CD4-positive, alpha-beta T cell (primary cell): ENCODE measurements at regions of chrX and their contacts with region 1.

Region 1: DNA sequence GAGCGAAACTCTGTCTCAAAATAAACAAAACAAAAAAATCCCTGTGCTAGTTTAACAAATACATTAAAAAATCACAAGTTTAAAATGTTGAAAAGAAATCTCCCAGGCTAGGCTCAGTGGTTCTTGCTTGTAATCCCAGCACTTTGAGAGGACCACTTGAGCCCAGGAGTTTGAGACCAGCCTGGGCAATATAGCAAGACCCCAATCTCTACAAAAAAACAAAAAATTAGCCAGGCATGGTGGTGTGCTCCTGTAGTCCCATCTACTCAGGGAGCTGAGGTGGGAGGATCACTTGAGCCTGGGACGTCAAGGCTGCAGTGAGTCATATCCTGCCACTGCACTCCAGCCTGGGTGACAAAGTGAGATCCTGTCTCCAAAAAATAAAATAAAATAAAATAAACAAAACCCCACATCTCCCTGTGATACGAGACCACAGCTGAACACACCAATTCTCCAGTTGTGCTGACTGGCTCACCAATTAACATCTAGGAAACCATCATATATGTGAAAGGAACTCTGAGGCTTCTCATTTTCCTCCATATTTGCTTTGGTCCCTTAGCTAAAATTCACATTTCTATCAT is 7.3 kb downstream of the RPS4X start:
- DNase-seq: peak in 4 of 14 experiments; percentile 7 to 31 (median 16)
- ATAC-seq: peak; percentile 64
- H3K4me3 ChIP-seq: no peak overlapping the region
- H3K4me3 Mint-ChIP-seq: no peak overlapping the region
- H3K27ac ChIP-seq: no peak overlapping the region
- H3K27ac Mint-ChIP-seq: peak overlapping the region; percentile 80
- H3K4me1 ChIP-seq: peaks cover 15% of the 10 kb centered on the region
- H3K4me1 Mint-ChIP-seq: peaks cover 28% of the 10 kb centered on the region
- H3K27me3 ChIP-seq: no peaks in the 10 kb centered on the region
- H3K27me3 Mint-ChIP-seq: no peaks in the 10 kb centered on the region
- CTCF ChIP-seq: no peak

Region 2: GRCh38 chrX:72018277-72019112 is 251.3 kb before region 1 on chrX:
- CTCF ChIA-PET with region 1: no interaction called
- POLR2A ChIA-PET with region 1: no interaction called
- intact Hi-C with region 1: loop called in 1 of 2 experiments (anchors 10 kb)
- DNase-seq: peak; percentile 60 to 92 (median 76)
- ATAC-seq: peak; percentile 97
- H3K4me3 ChIP-seq: peak overlapping the region; percentile 10
- H3K4me3 Mint-ChIP-seq: no peak overlapping the region
- H3K27ac ChIP-seq: no peak overlapping the region
- H3K27ac Mint-ChIP-seq: no peak overlapping the region
- H3K4me1 ChIP-seq: peaks cover 25% of the 10 kb centered on the region
- H3K4me1 Mint-ChIP-seq: peaks cover 12% of the 10 kb centered on the region
- H3K27me3 ChIP-seq: no peaks in the 10 kb centered on the region
- H3K27me3 Mint-ChIP-seq: peaks cover 15% of the 10 kb centered on the region
- CTCF ChIP-seq: peak; percentile 65

Region 3: DNA sequence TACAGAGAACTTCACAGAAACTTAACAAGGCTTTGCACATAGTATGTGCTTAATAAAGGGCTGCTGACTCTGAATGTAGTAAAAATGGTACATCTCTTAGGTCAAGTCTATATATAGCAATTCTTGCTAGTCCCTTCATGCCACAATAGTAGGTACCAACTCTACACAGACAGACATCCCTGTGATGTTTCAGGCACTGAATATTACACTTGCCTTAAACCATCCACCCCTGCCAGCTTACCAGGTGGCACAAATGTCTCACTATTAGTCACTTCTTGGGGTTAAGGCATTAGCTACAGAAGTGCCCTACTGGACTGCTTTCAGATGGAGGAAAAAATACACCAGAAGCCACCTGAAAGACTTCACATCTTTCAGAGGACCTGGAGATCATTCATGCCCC is 122.3 kb after region 1 on chrX:
- CTCF ChIA-PET with region 1: no interaction called
- POLR2A ChIA-PET with region 1: no interaction called
- intact Hi-C with region 1: no loop called
- DNase-seq: no peak
- ATAC-seq: no peak
- H3K4me3 ChIP-seq: no peak overlapping the region
- H3K4me3 Mint-ChIP-seq: no peak overlapping the region
- H3K27ac ChIP-seq: no peak overlapping the region
- H3K27ac Mint-ChIP-seq: no peak overlapping the region
- H3K4me1 ChIP-seq: no peaks in the 10 kb centered on the region
- H3K4me1 Mint-ChIP-seq: no peaks in the 10 kb centered on the region
- H3K27me3 ChIP-seq: no peaks in the 10 kb centered on the region
- H3K27me3 Mint-ChIP-seq: no peaks in the 10 kb centered on the region
- CTCF ChIP-seq: no peak

Region 4: GRCh38 chrX:72572248-72573157 is 302.7 kb after region 1 on chrX and contains the start of gene HDAC8:
- CTCF ChIA-PET with region 1: no interaction called
- POLR2A ChIA-PET with region 1: no interaction called
- intact Hi-C with region 1: loop called in 1 of 2 experiments (anchors 10 kb)
- DNase-seq: peak; percentile 7 to 79 (median 24)
- ATAC-seq: peak; percentile 83
- H3K4me3 ChIP-seq: peak within 1 kb of the TSS; percentile 88
- H3K4me3 Mint-ChIP-seq: peak within 1 kb of the TSS; percentile 97
- H3K27ac ChIP-seq: peak within 1 kb of the TSS in 1 of 2 donors; percentile 64
- H3K27ac Mint-ChIP-seq: peak within 1 kb of the TSS; percentile 80
- H3K4me1 ChIP-seq: no peaks in the 10 kb centered on the region
- H3K4me1 Mint-ChIP-seq: peaks cover 6% of the 10 kb centered on the region
- H3K27me3 ChIP-seq: peaks cover 0 to 4% of the 10 kb centered on the region in 2 experiments
- H3K27me3 Mint-ChIP-seq: no peaks in the 10 kb centered on the region
- CTCF ChIP-seq: no peak
- total RNA-seq, gene HDAC8: 5.8 to 6.8 TPM

Region 5: DNA sequence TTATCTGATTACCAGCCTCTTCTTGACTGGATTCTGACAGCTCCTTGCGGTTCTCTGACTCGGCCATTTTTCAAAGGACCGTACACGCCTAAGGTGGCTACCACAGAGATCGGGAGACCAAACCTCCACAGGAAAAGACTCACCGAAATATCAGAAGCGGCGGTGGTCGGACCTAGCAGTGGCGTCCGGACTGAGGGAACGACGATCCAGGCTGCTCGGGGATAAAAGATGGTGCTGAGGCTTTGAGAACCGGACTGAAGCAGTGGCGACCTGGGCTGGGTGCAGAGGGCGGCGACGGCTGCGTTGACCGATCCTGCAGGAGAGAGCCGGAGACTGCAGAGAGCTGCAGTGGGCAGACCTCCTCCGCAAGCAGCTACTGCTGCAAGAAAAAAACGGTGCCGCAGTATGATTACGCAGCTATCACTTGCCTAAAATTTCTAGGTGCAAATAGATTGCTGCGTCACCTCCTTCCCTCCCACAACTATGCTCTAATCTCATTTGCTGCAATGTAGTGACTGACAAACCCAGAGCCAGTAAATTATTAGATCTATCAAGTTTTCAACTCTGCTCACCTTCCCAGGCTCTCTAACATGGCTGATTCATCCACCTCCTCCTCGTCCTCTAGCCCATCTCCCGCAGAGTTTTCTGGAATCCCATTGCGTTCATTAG is 944.8 kb after region 1 on chrX and contains the start of gene NAP1L2:
- CTCF ChIA-PET with region 1: no interaction called
- POLR2A ChIA-PET with region 1: no interaction called
- intact Hi-C with region 1: loop called in 1 of 2 experiments (anchors 10 kb)
- DNase-seq: peak; percentile 2 to 81 (median 30)
- ATAC-seq: peak; percentile 88
- H3K4me3 ChIP-seq: peak within 1 kb of the TSS; percentile 70
- H3K4me3 Mint-ChIP-seq: peak within 1 kb of the TSS; percentile 93
- H3K27ac ChIP-seq: peak within 1 kb of the TSS in 1 of 2 donors; percentile 67
- H3K27ac Mint-ChIP-seq: peak within 1 kb of the TSS; percentile 92
- H3K4me1 ChIP-seq: no peaks in the 10 kb centered on the region
- H3K4me1 Mint-ChIP-seq: peaks cover 32% of the 10 kb centered on the region
- H3K27me3 ChIP-seq: no peaks in the 10 kb centered on the region
- H3K27me3 Mint-ChIP-seq: no peaks in the 10 kb centered on the region
- CTCF ChIP-seq: no peak
- total RNA-seq, gene NAP1L2: 4.2 to 4.8 TPM

Region 6: DNA sequence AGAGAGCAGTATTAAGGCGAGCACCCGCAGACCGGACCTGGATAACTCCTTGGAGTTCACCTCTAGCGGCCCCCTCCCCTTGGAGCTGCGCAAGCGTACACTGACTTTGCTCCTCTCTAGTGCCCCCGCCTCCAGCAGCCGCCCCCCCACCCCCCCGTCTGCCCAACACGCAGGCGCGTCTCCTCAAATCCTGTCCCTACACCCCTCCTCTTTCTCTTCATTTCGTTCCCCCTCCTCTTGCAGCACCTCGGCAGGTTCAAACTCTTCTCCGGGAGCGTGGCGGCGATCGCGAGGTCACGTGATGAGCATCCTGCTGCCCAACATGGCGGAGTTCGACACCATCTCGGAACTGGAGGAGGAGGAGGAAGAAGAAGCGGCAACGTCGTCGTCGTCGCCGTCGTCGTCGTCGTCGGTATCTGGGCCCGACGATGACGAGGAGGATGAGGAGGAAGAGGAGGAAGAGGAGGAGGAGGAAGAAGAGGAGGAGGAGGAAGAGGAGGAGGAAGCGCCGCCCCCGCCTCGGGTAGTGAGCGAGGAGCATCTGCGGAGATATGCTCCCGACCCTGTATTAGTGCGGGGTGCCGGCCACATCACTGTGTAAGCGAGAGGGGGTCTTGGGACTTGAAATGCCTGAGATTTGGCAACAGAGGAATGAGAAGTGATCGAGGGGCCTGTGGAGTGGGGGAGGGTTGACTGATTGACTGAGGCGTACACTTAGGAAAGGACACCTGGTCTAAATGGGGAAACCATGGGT is 1293.4 kb after region 1 on chrX and contains the start of gene CHIC1:
- CTCF ChIA-PET with region 1: no interaction called
- POLR2A ChIA-PET with region 1: no interaction called
- intact Hi-C with region 1: loop called in 1 of 2 experiments (anchors 10 kb)
- DNase-seq: peak; percentile 48 to 89 (median 64)
- ATAC-seq: peak; percentile 73
- H3K4me3 ChIP-seq: peak within 1 kb of the TSS; percentile 74
- H3K4me3 Mint-ChIP-seq: peak within 1 kb of the TSS; percentile 96
- H3K27ac ChIP-seq: peak within 1 kb of the TSS; percentile 78 to 94
- H3K27ac Mint-ChIP-seq: peak within 1 kb of the TSS; percentile 96
- H3K4me1 ChIP-seq: peaks cover 6% of the 10 kb centered on the region
- H3K4me1 Mint-ChIP-seq: peaks cover 31% of the 10 kb centered on the region
- H3K27me3 ChIP-seq: no peaks in the 10 kb centered on the region
- H3K27me3 Mint-ChIP-seq: no peaks in the 10 kb centered on the region
- CTCF ChIP-seq: no peak
- total RNA-seq, gene CHIC1: 7.0 to 7.2 TPM